Naive thymus-derived CD4-positive, alpha-beta T cell (primary cell): ENCODE measurements at regions of chr6 and their contacts with region 1.

Region 1: DNA sequence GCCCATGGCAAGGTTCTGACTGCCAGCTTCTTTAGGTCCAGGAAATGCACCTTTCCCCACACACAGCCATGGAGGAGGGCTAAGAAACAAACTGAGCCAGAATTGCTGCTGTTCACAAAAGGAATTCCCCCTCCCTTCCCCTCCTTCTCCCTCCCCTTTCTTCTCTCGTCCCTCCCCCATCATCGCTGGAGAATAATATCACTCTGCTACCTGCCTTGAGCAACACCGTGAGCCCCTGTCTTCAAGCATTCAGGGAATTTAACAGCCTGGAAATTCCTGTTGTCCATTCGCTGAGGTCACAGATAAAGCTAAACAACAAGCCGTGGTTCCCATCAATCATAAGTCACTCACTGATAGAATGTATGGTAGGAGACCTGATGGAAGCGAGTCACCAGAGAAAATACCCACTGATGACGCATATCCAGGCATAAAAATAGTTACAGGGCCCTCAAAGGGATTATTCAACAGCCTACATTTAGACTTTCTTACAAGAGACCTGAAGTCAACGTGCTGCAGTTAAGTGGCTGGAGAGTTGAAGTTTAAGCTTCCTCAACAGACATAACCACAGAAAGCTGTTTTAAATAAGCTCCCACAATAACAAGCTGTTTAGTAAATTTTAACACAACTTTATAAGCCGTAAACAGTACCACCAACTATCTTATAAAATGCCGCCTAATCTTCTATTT is 59.7 kb downstream of the HIVEP2 start:
- DNase-seq: peak; percentile 28 to 91 (median 83)
- ATAC-seq: peak; percentile 92
- H3K4me3 ChIP-seq: peak overlapping the region; percentile 44
- H3K4me3 Mint-ChIP-seq: peak overlapping the region; percentile 78 to 98 (median 94)
- H3K27ac ChIP-seq: peak overlapping the region; percentile 84
- H3K27ac Mint-ChIP-seq: peak overlapping the region; percentile 76 to 100 (median 99)
- H3K4me1 ChIP-seq: peaks cover 52 to 62% of the 10 kb centered on the region in 2 donors
- H3K4me1 Mint-ChIP-seq: peaks cover 45 to 99% (median 94%) of the 10 kb centered on the region in 7 donors
- H3K27me3 ChIP-seq: no peaks in the 10 kb centered on the region
- H3K27me3 Mint-ChIP-seq: no peaks in the 10 kb centered on the region

Region 2: DNA sequence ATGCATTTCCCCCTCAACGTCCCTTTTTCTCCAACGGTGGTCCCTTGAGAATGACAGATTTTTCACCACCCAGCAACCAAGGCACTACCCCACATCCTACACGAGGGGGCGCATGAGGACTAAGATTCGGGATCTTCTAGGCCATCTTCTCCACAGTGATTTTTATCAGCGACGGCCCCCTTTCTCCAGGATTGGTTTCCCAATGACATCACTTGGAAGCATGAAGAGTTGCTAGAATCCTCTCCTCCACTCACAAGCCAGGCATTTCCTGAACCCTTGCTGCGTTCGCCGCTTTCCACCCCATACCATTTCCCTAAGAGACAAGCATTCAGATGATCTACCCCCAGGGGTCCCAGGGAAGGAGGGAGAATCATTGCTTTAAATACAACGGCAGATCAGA is 192.4 kb before region 1 on chr6:
- CTCF ChIA-PET with region 1: interaction called, 10 read pairs
- POLR2A ChIA-PET with region 1: interaction called, 3 read pairs
- intact Hi-C with region 1: loop called (anchors 1 to 5 kb)
- DNase-seq: peak; percentile 39 to 73 (median 57)
- ATAC-seq: peak; percentile 89
- H3K4me3 ChIP-seq: no peak overlapping the region
- H3K4me3 Mint-ChIP-seq: peak overlapping the region in 3 of 10 donors; percentile 0 to 27 (median 16)
- H3K27ac ChIP-seq: no peak overlapping the region
- H3K27ac Mint-ChIP-seq: peak overlapping the region in 7 of 9 donors; percentile 5 to 59 (median 40)
- H3K4me1 ChIP-seq: peaks cover 0 to 7% of the 10 kb centered on the region in 2 donors
- H3K4me1 Mint-ChIP-seq: peaks cover 9 to 31% (median 22%) of the 10 kb centered on the region in 7 donors
- H3K27me3 ChIP-seq: no peaks in the 10 kb centered on the region
- H3K27me3 Mint-ChIP-seq: peaks cover 0 to 2% (median 0%) of the 10 kb centered on the region in 5 donors

Region 3: GRCh38 chr6:142819603-142820337 is 65.6 kb before region 1 on chr6:
- CTCF ChIA-PET with region 1: interaction called, 3 read pairs
- POLR2A ChIA-PET with region 1: interaction called, 8 read pairs
- intact Hi-C with region 1: loop called (anchors 1 kb)
- DNase-seq: peak in 6 of 9 donors; percentile 27 to 80 (median 44)
- ATAC-seq: peak; percentile 75
- H3K4me3 ChIP-seq: peak overlapping the region; percentile 66
- H3K4me3 Mint-ChIP-seq: peak overlapping the region; percentile 72 to 93 (median 89)
- H3K27ac ChIP-seq: peak overlapping the region; percentile 82
- H3K27ac Mint-ChIP-seq: peak overlapping the region; percentile 68 to 99 (median 92)
- H3K4me1 ChIP-seq: peaks cover 59 to 67% of the 10 kb centered on the region in 2 donors
- H3K4me1 Mint-ChIP-seq: peaks cover 52 to 95% (median 83%) of the 10 kb centered on the region in 7 donors
- H3K27me3 ChIP-seq: no peaks in the 10 kb centered on the region
- H3K27me3 Mint-ChIP-seq: no peaks in the 10 kb centered on the region

Region 4: GRCh38 chr6:142857233-142857761 is 28.0 kb before region 1 on chr6:
- CTCF ChIA-PET with region 1: interaction called, 5 read pairs
- POLR2A ChIA-PET with region 1: interaction called, 96 read pairs
- intact Hi-C with region 1: loop called (anchors 1 kb)
- DNase-seq: peak in 7 of 9 donors; percentile 54 to 77 (median 68)
- ATAC-seq: peak; percentile 59
- H3K4me3 ChIP-seq: peak overlapping the region; percentile 54
- H3K4me3 Mint-ChIP-seq: peak overlapping the region; percentile 72 to 88 (median 84)
- H3K27ac ChIP-seq: peak overlapping the region; percentile 86
- H3K27ac Mint-ChIP-seq: peak overlapping the region; percentile 91 to 100 (median 98)
- H3K4me1 ChIP-seq: peaks cover 62 to 81% of the 10 kb centered on the region in 2 donors
- H3K4me1 Mint-ChIP-seq: peaks cover 54 to 98% (median 93%) of the 10 kb centered on the region in 7 donors
- H3K27me3 ChIP-seq: no peaks in the 10 kb centered on the region
- H3K27me3 Mint-ChIP-seq: no peaks in the 10 kb centered on the region

Region 5: GRCh38 chr6:142913511-142914047 is 28.3 kb after region 1 on chr6:
- CTCF ChIA-PET with region 1: interaction called, 5 read pairs
- POLR2A ChIA-PET with region 1: interaction called, 6 read pairs
- intact Hi-C with region 1: loop called (anchors 1 kb)
- DNase-seq: peak; percentile 34 to 83 (median 80)
- ATAC-seq: peak; percentile 93
- H3K4me3 ChIP-seq: peak overlapping the region; percentile 55
- H3K4me3 Mint-ChIP-seq: peak overlapping the region; percentile 71 to 94 (median 87)
- H3K27ac ChIP-seq: peak overlapping the region; percentile 82
- H3K27ac Mint-ChIP-seq: peak overlapping the region in 7 of 9 donors; percentile 95 to 100 (median 99)
- H3K4me1 ChIP-seq: peaks cover 52 to 75% of the 10 kb centered on the region in 2 donors
- H3K4me1 Mint-ChIP-seq: peaks cover 52 to 96% (median 93%) of the 10 kb centered on the region in 7 donors
- H3K27me3 ChIP-seq: no peaks in the 10 kb centered on the region
- H3K27me3 Mint-ChIP-seq: no peaks in the 10 kb centered on the region